Naive thymus-derived CD4-positive, alpha-beta T cell (primary cell): ENCODE measurements at regions of chr3 and their contacts with region 1.

Region 1: DNA sequence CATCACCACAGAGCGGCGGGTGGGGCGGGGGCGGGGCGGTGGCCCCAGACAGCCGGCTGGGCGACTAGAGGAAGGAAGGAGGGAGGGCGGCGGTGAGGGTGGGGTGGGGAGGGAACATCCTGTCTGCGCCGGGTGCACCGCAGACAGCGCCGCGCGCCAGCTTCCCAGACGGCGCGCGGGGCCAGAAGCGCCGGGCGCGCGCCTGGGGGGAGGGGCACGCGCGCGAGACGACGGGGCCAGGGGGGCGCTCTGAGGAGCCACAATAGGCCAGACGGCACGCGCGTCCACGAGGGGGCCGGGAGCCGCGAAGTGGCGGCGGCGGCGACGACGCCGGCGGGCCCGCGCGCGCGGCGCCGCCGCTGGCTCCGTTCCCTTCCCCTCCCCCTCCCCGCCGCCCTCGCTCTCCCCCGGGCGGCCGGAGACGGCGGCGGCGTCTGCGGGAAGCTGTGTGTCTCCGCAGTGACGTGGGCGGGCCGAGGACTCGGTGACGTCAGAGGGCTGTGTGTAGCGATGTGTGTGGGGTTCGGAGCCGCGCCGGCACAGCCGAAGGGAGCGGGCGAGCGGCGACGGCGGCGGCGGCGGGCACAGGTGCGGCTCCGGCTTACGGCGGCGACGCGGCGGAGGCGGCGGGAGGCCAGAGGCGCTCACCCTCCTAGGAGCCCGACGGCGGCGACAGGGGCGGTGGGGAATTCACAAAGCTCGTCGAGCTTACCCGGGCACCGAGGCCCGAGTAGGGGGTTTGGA is at the start of gene SKIL:
- DNase-seq: peak; percentile 93 to 98 (median 96)
- ATAC-seq: peak; percentile 84
- H3K4me3 ChIP-seq: peak within 1 kb of the TSS; percentile 63
- H3K4me3 Mint-ChIP-seq: peak within 1 kb of the TSS; percentile 80 to 96 (median 94)
- H3K27ac ChIP-seq: peak within 1 kb of the TSS; percentile 99
- H3K27ac Mint-ChIP-seq: peak within 1 kb of the TSS; percentile 91 to 99 (median 97)
- H3K4me1 ChIP-seq: peaks cover 7 to 13% of the 10 kb centered on the region in 2 donors
- H3K4me1 Mint-ChIP-seq: peaks cover 28 to 68% (median 60%) of the 10 kb centered on the region in 7 donors
- H3K27me3 ChIP-seq: no peaks in the 10 kb centered on the region
- H3K27me3 Mint-ChIP-seq: peaks cover 0 to 26% (median 0%) of the 10 kb centered on the region in 5 donors
- total RNA-seq, gene SKIL: 19.1 to 80.5 (median 40.9) TPM

Region 2: DNA sequence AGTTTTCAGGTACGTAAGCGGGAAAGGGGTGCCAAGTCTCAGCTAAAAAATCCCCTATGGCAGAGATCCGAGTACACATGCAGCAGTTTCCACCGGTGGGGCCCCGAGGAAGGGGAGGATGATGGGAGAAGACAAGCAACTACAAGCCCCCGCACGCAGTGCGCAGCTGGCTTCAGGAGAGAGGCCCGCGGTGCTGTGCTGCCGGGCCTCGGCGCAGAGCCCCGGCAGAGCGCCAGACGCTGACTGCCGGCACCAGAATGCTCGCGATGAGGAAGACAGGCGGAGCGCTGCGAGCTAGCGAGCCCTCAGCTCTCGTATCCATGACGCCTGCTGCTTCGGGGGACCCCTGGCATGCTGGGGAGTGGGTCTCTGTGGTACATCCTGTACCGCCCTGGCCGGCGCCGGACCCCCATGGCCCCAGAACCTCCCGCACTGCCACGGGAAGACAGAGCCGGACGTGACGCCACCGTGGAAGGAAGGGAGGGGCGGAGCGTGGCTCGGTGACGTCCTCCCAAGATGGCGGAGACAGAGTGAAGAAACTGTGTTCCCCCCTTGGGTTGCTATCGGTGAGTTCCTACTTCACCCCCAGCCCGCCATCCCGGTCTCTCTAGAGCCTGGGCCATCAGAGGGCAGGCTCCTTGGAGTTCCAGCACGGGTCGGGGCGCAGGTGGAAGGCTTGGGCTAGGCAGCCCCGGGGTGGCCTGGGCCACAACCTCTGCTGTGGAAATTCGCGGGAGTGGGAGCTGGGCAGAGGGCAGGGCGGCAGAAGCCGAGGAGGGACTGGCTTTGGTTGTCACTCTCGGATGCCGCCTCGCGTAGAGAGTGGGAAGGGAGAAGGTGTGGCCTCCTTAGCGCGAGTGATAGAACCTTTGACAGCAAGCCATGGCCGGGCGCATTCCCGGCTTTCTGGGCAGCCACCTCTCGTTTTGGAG is 584.2 kb before region 1 on chr3 and contains the start of gene MYNN:
- CTCF ChIA-PET with region 1: no interaction called
- POLR2A ChIA-PET with region 1: interaction called, 6 read pairs
- intact Hi-C with region 1: loop called (anchors 1 to 2 kb)
- DNase-seq: peak; percentile 87 to 95 (median 93)
- ATAC-seq: peak; percentile 90
- H3K4me3 ChIP-seq: peak within 1 kb of the TSS; percentile 87
- H3K4me3 Mint-ChIP-seq: peak within 1 kb of the TSS; percentile 91 to 99 (median 97)
- H3K27ac ChIP-seq: peak within 1 kb of the TSS; percentile 100
- H3K27ac Mint-ChIP-seq: peak within 1 kb of the TSS; percentile 96 to 100 (median 99)
- H3K4me1 ChIP-seq: peaks cover 15 to 22% of the 10 kb centered on the region in 2 donors
- H3K4me1 Mint-ChIP-seq: peaks cover 18 to 69% (median 56%) of the 10 kb centered on the region in 7 donors
- H3K27me3 ChIP-seq: no peaks in the 10 kb centered on the region
- H3K27me3 Mint-ChIP-seq: peaks cover 0 to 5% (median 0%) of the 10 kb centered on the region in 5 donors
- total RNA-seq, gene MYNN: 16.2 to 20.8 (median 19.0) TPM

Region 3: GRCh38 chr3:170180908-170181879 is 176.2 kb before region 1 on chr3 and contains the start of gene PHC3:
- CTCF ChIA-PET with region 1: no interaction called
- POLR2A ChIA-PET with region 1: interaction called, 18 read pairs
- intact Hi-C with region 1: loop called (anchors 1 kb)
- DNase-seq: peak; percentile 88 to 95 (median 92)
- ATAC-seq: peak; percentile 86
- H3K4me3 ChIP-seq: peak within 1 kb of the TSS; percentile 93
- H3K4me3 Mint-ChIP-seq: peak within 1 kb of the TSS; percentile 88 to 100 (median 99)
- H3K27ac ChIP-seq: peak within 1 kb of the TSS; percentile 98
- H3K27ac Mint-ChIP-seq: peak within 1 kb of the TSS; percentile 96 to 100 (median 100)
- H3K4me1 ChIP-seq: peaks cover 19 to 39% of the 10 kb centered on the region in 2 donors
- H3K4me1 Mint-ChIP-seq: peaks cover 19 to 40% (median 33%) of the 10 kb centered on the region in 7 donors
- H3K27me3 ChIP-seq: no peaks in the 10 kb centered on the region
- H3K27me3 Mint-ChIP-seq: peaks cover 0 to 2% (median 0%) of the 10 kb centered on the region in 5 donors
- total RNA-seq, gene PHC3: 78.9 to 215 (median 158) TPM

Region 4: DNA sequence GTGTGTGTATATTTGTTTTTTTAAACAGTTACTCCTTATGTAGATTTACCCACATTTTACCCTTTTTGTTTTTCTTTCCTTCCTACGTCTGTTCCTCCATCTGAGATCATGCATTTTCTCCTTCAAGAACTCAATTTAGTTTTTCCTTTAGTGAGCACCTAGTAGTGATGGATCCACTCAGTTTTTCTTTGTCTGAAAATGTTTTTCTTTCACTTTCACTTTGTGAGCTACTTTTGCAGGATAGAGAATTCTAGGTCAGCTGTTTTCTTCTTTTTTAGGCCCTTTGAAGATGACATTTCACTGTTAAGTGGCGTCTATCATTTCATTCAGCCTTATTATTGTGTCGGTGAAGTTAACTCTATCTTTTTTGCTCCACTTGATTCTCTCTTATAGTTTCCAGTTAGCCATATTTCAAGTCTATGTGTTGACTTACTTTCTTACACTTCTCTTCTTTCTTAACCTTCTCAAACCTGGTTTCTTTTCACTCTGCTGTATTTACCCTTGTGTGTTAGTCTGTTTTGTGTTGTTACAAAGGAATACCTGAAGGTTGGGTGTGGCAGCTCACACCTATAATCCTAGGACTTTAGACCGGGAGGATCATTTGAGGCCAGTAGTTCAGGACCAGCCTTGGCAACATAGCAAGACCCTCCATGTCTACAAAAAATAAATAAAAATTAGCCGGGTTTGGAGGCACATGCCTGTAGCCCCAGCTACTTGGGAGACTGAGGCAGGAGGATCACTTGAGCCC is 79.3 kb before region 1 on chr3:
- CTCF ChIA-PET with region 1: no interaction called
- POLR2A ChIA-PET with region 1: interaction called, 4 read pairs
- intact Hi-C with region 1: loop called in 1 of 2 experiments (anchors 2 kb)
- DNase-seq: peak in 6 of 9 donors; percentile 5 to 40 (median 22)
- ATAC-seq: peak; percentile 38
- H3K4me3 ChIP-seq: peak overlapping the region; percentile 39
- H3K4me3 Mint-ChIP-seq: peak overlapping the region; percentile 69 to 94 (median 81)
- H3K27ac ChIP-seq: no peak overlapping the region
- H3K27ac Mint-ChIP-seq: peak overlapping the region; percentile 41 to 94 (median 76)
- H3K4me1 ChIP-seq: peaks cover 5 to 6% of the 10 kb centered on the region in 2 donors
- H3K4me1 Mint-ChIP-seq: peaks cover 15 to 32% (median 23%) of the 10 kb centered on the region in 7 donors
- H3K27me3 ChIP-seq: no peaks in the 10 kb centered on the region
- H3K27me3 Mint-ChIP-seq: no peaks in the 10 kb centered on the region

Region 5: GRCh38 chr3:170414202-170414663 is 56.9 kb after region 1 on chr3:
- CTCF ChIA-PET with region 1: interaction called, 3 read pairs
- POLR2A ChIA-PET with region 1: interaction called, 4 read pairs
- intact Hi-C with region 1: loop called (anchors 1 kb)
- DNase-seq: peak in 6 of 9 donors; percentile 25 to 58 (median 48)
- ATAC-seq: peak; percentile 75
- H3K4me3 ChIP-seq: no peak overlapping the region
- H3K4me3 Mint-ChIP-seq: no peak overlapping the region
- H3K27ac ChIP-seq: no peak overlapping the region
- H3K27ac Mint-ChIP-seq: no peak overlapping the region
- H3K4me1 ChIP-seq: peaks cover 4 to 7% of the 10 kb centered on the region in 2 donors
- H3K4me1 Mint-ChIP-seq: peaks cover 5 to 15% (median 7%) of the 10 kb centered on the region in 7 donors
- H3K27me3 ChIP-seq: peaks cover 0 to 8% of the 10 kb centered on the region in 2 donors
- H3K27me3 Mint-ChIP-seq: peaks cover 14 to 40% (median 17%) of the 10 kb centered on the region in 5 donors

Region 6: DNA sequence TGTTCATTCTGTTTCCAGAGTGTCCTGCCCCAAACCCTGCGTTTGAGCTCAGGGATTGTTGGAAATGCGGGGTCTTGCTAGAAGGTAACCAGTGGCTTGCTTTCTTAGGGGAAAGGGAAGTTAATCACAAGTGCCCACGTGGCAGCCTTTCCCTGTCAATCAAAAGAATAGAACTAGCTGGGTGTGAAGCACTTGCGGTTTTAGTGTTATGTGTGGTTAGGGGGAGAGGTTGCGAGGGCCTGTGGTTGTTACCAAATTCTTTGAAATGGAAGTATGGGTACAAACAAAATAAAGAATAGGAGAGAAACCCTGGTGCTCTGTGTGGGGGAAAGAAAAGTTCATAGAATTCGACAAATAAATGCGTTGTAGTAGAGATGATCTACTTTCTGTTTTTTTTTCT is 1749.6 kb after region 1 on chr3:
- CTCF ChIA-PET with region 1: no interaction called
- POLR2A ChIA-PET with region 1: no interaction called
- intact Hi-C with region 1: loop called (anchors 5 to 10 kb)
- DNase-seq: peak in 8 of 9 donors; percentile 57 to 89 (median 84)
- ATAC-seq: peak; percentile 80
- H3K4me3 ChIP-seq: peak overlapping the region; percentile 45
- H3K4me3 Mint-ChIP-seq: peak overlapping the region; percentile 78 to 89 (median 84)
- H3K27ac ChIP-seq: peak overlapping the region; percentile 54
- H3K27ac Mint-ChIP-seq: peak overlapping the region; percentile 88 to 94 (median 91)
- H3K4me1 ChIP-seq: peaks cover 44 to 73% of the 10 kb centered on the region in 2 donors
- H3K4me1 Mint-ChIP-seq: peaks cover 65 to 91% (median 82%) of the 10 kb centered on the region in 7 donors
- H3K27me3 ChIP-seq: no peaks in the 10 kb centered on the region
- H3K27me3 Mint-ChIP-seq: peaks cover 0 to 8% (median 0%) of the 10 kb centered on the region in 5 donors